ENCODE measurements at regions of chr18 and their contacts with region 1.

Region 1: DNA sequence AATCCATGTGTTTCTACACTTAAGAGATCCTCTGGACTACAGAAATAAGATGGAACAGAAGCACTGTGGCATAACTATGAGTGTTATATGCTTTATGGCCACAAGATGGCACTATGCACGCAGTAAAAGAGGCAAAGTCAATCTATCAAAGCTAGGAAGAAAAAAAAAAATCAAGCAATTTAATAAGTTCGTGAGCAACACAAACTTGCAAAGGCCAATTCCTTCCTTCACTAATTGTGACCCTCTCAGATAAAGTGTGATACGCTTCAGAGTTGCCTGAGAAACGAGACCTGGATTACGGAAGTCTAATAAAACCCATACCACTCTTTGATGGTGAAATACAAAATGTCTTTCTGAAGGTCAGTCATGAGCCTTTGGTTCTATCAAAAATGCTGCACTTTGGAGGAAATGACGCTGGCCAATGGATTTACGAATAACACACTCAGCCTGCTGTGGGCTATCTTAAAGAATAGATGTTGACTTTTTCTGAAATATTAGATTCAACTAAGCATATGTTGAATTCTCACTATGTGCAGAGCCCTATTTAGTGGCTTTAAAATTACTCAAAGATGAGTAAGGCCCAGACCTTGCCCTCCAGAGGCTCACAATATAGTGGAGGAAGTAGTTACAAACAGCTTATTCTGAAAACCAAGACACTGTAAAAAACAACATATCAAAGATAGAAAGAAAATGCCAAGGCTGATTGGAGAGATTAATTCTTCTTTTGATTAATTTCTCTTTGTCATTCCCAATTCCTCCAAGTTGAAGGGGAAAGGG is 35.5 kb upstream of the TTR start:
- DNase-seq: peak; percentile 6
- H3K4me3 Mint-ChIP-seq: no peak overlapping the region
- H3K27ac Mint-ChIP-seq: no peak overlapping the region
- H3K4me1 Mint-ChIP-seq: no peaks in the 10 kb centered on the region
- H3K27me3 Mint-ChIP-seq: peaks cover 6% of the 10 kb centered on the region

Region 2: DNA sequence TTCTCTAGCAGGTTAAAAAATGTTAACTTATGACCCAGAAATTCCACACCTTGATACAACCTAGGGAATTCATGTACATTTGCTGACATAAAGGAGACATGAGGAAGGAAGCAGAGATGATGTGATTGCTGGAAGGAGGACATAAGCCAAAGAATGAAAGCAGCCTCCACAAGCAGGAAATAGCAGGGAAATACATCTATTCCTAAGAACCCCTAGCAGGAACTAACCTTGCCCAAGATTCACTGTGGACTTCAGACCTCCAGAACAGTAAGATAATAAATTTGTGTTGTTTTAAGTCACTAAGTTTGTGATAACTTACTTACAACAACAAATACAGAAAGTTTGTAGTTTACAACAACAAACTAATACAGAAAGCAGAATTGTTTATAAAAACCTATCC is 184.2 kb before region 1 on chr18:
- intact Hi-C with region 1: no loop called
- DNase-seq: no peak
- H3K4me3 Mint-ChIP-seq: no peak overlapping the region
- H3K27ac Mint-ChIP-seq: no peak overlapping the region
- H3K4me1 Mint-ChIP-seq: no peaks in the 10 kb centered on the region
- H3K27me3 Mint-ChIP-seq: peaks cover 2% of the 10 kb centered on the region

Region 3: GRCh38 chr18:31626409-31626808 is 70.2 kb after region 1 on chr18:
- intact Hi-C with region 1: loop called (anchors 5 kb)
- DNase-seq: no peak
- H3K4me3 Mint-ChIP-seq: no peak overlapping the region
- H3K27ac Mint-ChIP-seq: no peak overlapping the region
- H3K4me1 Mint-ChIP-seq: no peaks in the 10 kb centered on the region
- H3K27me3 Mint-ChIP-seq: peaks cover 8% of the 10 kb centered on the region

Region 4: DNA sequence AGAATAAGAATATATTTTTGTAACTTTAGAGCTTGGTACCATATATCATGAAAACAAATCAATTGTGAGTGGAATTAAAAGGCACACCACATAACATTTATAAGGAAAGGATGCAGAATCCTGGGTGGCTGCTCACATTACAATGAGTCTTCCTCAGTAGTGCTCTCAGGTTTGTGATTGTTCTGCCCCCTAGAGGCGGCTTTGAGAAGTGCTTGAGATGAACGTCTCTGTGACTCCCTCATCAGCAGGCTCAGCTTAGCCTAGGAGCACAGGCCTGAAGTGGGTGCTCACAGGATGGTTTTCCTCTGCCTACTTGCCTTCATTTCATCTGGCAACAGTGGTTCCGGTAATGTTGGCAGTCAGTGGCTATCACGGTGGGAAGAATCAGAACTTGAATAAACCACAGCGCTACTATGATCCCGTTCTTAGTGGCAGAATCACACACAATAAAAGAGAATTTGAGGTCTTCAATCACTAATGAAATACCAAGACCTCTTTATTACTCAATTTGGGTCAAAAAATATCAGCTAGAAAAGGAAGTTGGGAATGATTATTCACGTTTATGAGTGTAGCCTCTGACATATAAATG is 166.3 kb after region 1 on chr18:
- intact Hi-C with region 1: loop called (anchors 1 kb)
- DNase-seq: peak; percentile 50
- H3K4me3 Mint-ChIP-seq: no peak overlapping the region
- H3K27ac Mint-ChIP-seq: no peak overlapping the region
- H3K4me1 Mint-ChIP-seq: peaks cover 6% of the 10 kb centered on the region
- H3K27me3 Mint-ChIP-seq: peaks cover 21% of the 10 kb centered on the region

Region 5: DNA sequence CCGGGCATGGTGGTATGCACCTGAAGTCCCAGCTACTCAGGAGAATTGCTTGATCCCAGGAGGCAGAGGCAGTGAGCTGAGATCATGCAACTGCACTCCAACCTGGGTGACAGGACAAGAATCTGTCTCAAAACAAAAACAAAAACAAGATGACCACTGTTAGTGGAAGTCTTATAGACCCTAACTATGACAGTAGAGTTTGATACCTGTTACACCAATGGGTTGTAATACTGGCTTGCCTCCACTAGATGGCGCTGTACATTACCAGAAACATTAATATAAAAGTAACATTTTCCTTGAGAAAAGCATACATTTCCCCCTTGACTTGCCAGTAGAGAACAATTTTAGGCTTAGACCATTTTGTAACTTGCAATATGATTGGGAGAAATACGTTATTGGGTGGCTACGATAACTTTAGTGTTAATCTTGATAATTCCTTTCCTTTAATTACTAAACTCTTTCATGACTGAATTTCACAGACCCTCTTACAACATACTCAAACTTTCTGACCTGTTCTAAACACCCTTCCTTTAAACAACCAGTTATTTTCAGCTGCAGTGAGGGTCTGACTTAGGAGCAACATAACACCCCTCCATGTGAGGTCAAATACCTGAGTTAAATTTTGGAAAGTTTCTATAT is 185.1 kb after region 1 on chr18:
- intact Hi-C with region 1: loop called (anchors 1 kb)
- DNase-seq: no peak
- H3K4me3 Mint-ChIP-seq: no peak overlapping the region
- H3K27ac Mint-ChIP-seq: no peak overlapping the region
- H3K4me1 Mint-ChIP-seq: no peaks in the 10 kb centered on the region
- H3K27me3 Mint-ChIP-seq: peaks cover 2% of the 10 kb centered on the region

Region 6: GRCh38 chr18:31819106-31819924 is 263.2 kb after region 1 on chr18:
- intact Hi-C with region 1: loop called (anchors 1 kb)
- DNase-seq: no peak
- H3K4me3 Mint-ChIP-seq: no peak overlapping the region
- H3K27ac Mint-ChIP-seq: no peak overlapping the region
- H3K4me1 Mint-ChIP-seq: no peaks in the 10 kb centered on the region
- H3K27me3 Mint-ChIP-seq: peaks cover 1% of the 10 kb centered on the region

Region 7: GRCh38 chr18:31957728-31958127 is 401.6 kb after region 1 on chr18:
- intact Hi-C with region 1: loop called (anchors 1 kb)
- DNase-seq: no peak
- H3K4me3 Mint-ChIP-seq: no peak overlapping the region
- H3K27ac Mint-ChIP-seq: no peak overlapping the region
- H3K4me1 Mint-ChIP-seq: no peaks in the 10 kb centered on the region
- H3K27me3 Mint-ChIP-seq: no peaks in the 10 kb centered on the region

Region 8: GRCh38 chr18:31977270-31977872 is 421.2 kb after region 1 on chr18:
- intact Hi-C with region 1: loop called (anchors 1 kb)
- DNase-seq: no peak
- H3K4me3 Mint-ChIP-seq: no peak overlapping the region
- H3K27ac Mint-ChIP-seq: no peak overlapping the region
- H3K4me1 Mint-ChIP-seq: no peaks in the 10 kb centered on the region
- H3K27me3 Mint-ChIP-seq: peaks cover 4% of the 10 kb centered on the region

Region 9: DNA sequence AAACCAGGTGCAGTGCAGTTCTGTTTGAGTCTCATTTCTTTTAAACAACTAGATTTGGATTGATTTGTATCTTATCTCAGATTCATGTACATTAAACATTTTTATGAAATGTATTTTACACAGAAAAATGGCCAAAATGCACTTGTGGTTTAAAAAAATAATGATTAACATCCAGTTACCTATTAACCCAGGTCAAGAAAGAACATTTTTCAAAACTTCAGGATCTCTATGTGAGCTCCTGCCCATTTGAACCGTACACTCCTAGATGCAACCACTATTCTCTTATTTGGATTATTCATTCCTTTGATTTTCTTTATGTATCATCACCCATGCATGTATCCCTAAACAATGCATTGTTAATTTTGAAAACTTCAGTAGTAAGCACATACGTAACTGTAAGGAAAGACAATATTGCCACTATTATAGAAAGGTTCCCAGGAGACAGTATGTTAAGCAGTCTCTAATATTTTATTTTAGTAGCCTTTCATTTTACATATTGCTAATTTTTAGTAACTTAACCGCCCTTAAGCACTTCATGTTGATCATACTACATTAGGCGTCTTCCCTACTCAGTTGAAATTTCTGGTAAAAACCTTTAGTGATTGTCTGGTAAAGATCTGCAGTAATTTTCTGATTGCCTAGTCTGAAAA is 558.3 kb after region 1 on chr18:
- intact Hi-C with region 1: no loop called
- DNase-seq: no peak
- H3K4me3 Mint-ChIP-seq: no peak overlapping the region
- H3K27ac Mint-ChIP-seq: no peak overlapping the region
- H3K4me1 Mint-ChIP-seq: peaks cover 33% of the 10 kb centered on the region
- H3K27me3 Mint-ChIP-seq: no peaks in the 10 kb centered on the region